ENCODE measurements at regions of chr10 and their contacts with region 1.

Region 1: DNA sequence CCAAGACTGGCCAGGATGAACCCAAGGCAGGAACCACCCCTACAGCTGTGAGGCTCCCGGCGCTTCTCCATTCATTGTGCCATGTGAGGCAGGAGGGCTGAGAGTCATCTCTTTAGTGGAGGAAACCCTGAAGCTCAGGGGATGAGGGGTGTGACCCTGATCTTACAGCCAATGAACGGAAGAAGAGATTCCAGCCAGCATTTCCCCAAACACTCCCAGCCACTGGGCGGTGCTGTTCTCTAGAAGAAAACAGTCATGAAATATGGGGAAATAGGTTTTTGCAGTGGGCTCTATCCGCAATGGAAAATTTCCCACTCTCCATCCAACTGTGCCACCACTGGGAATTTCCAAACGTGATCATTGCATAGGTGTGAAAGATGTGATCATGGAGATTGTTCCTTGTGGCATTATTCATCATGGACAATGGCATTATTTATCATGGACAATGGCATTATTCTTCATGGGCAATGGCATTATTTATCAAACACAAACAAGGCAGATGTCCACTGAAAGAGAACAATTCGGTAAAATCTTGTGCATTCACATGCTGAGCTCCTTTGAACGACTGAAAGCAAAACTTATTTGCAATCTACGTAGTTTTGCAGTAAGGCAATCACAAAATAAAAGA is 14.0 kb upstream of the SLC18A2 start:
- DNase-seq: peak; percentile 48
- CTCF ChIP-seq: peak; percentile 61

Region 2: GRCh38 chr10:117053482-117053881 is 173.5 kb before region 1 on chr10:
- in situ Hi-C with region 1: no loop called
- DNase-seq: no peak
- CTCF ChIP-seq: no peak

Region 3: GRCh38 chr10:117318909-117319308 is 92.0 kb after region 1 on chr10:
- in situ Hi-C with region 1: loop called (anchors 10 kb)
- DNase-seq: no peak
- CTCF ChIP-seq: peak; percentile 33

Measured in GM13977 (cell line).